Ovary (tissue), 10 donors: ENCODE measurements at regions of chr16 and their contacts with region 1.

Region 1: GRCh38 chr16:70529051-70529777 is 5.6 kb downstream of the SF3B3 start:
- DNase-seq: no peak
- H3K4me3 ChIP-seq: no peak overlapping the region
- H3K27ac ChIP-seq: no peak overlapping the region
- H3K4me1 ChIP-seq: peaks cover 6% of the 10 kb centered on the region
- H3K27me3 ChIP-seq: no peaks in the 10 kb centered on the region
- CTCF ChIP-seq: peak in 1 of 3 donors; percentile 35
- EP300 ChIP-seq: no peak
- POLR2A ChIP-seq: no peak

Region 2: DNA sequence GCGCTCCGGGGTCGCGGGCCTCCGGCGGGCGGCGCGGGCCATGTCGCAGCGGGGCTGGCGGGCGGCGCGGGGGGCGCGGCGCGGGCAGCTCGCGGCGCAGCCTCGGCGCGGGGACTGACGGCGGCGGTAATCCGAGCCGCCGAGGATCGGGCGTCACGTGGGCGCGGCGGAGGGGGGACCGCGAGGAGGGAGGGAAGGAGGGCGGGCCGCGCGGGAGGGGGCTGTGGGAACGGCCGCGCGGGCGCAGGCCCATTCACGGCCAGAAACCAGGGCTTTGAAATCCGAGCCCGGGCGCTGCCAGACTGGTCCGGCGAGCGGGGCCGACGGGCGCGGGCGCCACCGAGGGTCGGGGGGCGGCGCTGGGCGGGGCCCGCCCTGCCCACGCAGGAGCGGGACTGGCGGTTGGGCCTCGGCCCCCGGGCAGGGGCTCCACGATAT is 156.7 kb after region 1 on chr16 and contains the start of gene MTSS2:
- intact Hi-C with region 1: no loop called
- DNase-seq: peak; percentile 91 to 94 (median 92)
- H3K4me3 ChIP-seq: peak within 1 kb of the TSS; percentile 83
- H3K27ac ChIP-seq: peak within 1 kb of the TSS; percentile 75 to 79
- H3K4me1 ChIP-seq: peaks cover 57% of the 10 kb centered on the region
- H3K27me3 ChIP-seq: no peaks in the 10 kb centered on the region
- CTCF ChIP-seq: peak in 1 of 3 donors; percentile 17
- EP300 ChIP-seq: no peak
- POLR2A ChIP-seq: peak; percentile 3
- total RNA-seq, gene MTSS2: 19.6 to 93.5 (median 40.2) TPM

Region 3: DNA sequence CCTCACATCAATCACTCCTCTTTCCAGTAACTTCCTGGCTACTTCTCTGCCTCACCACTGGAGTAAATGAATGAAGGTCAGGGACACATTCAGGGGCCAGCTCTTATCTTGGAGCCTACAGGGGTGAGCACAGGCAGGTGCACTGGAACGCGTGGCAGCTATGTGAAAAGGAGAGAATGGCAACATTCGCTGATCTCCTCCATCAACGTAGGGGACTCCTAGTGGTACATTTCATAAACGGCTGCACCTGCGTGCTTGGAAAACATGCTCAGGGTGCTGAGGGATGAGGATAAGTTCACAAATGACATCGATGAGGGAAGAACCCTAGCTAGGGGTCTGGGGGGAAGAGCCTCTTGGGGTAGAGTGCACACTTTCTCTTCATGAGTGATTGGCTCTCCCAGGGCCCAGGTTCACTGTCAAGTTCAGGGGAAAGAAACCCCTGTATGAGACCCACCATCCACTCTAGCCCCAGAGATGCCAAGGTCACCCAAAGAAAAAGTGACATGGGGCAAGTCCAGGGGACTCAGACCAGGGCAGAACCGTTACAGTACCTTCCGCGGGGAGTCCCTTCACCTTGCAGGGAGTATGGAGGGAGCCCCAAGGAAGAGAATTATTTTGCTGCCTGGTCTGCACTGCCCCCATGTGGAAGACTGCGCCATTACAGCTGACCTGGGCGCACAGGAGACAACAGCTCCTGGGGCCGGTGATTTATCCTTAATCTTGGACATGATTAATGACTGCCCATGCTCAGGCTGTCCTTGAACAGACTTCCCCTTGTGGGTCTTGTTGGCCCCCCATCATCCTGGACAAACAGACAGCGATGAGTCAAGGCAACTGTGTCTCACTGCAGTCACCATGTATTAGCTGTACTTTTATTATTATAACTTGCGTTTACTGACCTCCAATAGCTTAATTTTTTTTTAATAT is 241.7 kb after region 1 on chr16:
- intact Hi-C with region 1: loop called in 1 of 4 experiments (anchors 5 kb)
- DNase-seq: peak; percentile 50 to 83 (median 75)
- H3K4me3 ChIP-seq: no peak overlapping the region
- H3K27ac ChIP-seq: no peak overlapping the region
- H3K4me1 ChIP-seq: no peaks in the 10 kb centered on the region
- H3K27me3 ChIP-seq: no peaks in the 10 kb centered on the region
- CTCF ChIP-seq: peak; percentile 78 to 92 (median 89)
- EP300 ChIP-seq: no peak
- POLR2A ChIP-seq: peak; percentile 23